ENCODE measurements at regions of chr2 and their contacts with region 1.

Region 1: DNA sequence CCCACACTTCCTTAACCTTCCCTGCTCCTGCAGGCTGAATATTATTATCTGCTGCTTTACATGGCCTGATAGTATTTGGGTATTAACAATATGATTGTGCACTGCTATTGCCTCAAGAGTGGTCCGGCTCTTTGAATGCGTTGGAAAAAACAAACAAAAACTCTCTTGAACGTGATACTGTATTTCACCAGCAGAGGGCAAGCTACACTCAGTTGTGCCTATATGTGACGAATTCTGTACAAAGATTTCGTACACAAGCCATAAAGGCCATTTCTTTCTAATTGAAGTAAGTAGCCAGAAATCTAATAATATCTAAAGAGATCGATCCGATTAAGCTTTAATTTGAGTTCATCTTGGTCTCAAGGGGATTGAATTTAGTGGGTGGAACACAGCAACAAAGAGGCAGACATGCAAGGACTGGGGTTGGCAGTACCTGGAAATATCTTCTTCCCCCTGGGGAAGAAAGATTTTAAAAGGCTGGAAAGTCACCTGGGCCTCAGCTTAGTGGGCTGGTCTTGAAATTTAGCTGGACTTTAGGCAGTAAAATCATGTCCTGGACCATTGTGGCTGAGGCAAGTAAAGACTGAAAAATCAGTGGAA is 49.3 kb upstream of the RAB6D start:
- DNase-seq: no peak
- ATAC-seq: peak in 3 of 8 donors; percentile 53 to 63 (median 56)
- H3K4me3 ChIP-seq: no peak overlapping the region
- H3K27ac ChIP-seq: no peak overlapping the region
- H3K4me1 ChIP-seq: no peaks in the 10 kb centered on the region
- H3K27me3 ChIP-seq: peaks cover 0 to 58% (median 43%) of the 10 kb centered on the region in 7 donors
- CTCF ChIP-seq: peak; percentile 53 to 85 (median 80)

Region 2: GRCh38 chr2:131154071-131154531 is 259.1 kb before region 1 on chr2:
- intact Hi-C with region 1: loop called in 2 of 10 experiments (anchors 10 kb)
- DNase-seq: peak; percentile 23 to 46
- ATAC-seq: peak; percentile 78 to 92 (median 86)
- H3K4me3 ChIP-seq: no peak overlapping the region
- H3K27ac ChIP-seq: no peak overlapping the region
- H3K4me1 ChIP-seq: no peaks in the 10 kb centered on the region
- H3K27me3 ChIP-seq: no peaks in the 10 kb centered on the region
- CTCF ChIP-seq: peak; percentile 48 to 81 (median 77)

Region 3: DNA sequence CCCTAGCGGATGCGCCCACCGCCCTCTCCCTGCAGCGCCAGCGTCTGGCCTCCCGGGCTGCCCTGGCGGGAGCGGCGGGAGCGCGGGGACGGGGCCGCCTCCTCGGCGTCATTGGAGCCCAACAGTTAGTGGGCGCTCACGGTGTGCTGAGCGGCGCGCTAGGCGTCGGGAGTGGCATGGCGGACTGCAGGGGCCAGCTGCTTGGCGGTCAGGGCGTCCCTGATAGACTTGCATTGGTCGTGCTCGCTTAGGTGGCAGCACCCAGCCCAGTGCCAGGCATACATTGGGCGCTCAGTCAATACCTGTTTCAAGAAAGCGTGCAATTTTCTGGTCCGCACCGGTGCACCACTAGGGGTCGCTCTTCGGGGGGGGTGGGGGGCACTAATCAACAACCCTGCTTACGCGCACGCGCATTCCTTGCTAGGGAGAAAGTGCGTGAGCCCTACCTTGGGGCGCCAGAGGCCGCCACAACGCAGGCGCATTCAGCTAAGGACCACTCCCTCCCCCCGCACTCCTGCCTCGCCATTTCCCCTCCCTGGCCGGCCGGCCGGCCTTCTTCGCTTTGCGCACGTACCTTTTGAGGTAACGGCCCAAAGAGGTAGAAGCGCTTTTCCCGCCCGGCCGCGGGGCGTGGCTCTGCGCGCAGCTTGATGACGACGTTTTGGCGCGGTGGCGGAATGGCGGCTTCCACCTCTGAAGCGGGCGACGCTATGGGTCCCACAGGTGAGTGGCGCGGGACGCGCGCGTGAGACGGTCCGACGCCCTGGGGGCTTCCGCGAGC is 79.4 kb after region 1 on chr2:
- intact Hi-C with region 1: loop called in 1 of 10 experiments (anchors 10 kb)
- DNase-seq: peak; percentile 91 to 92
- ATAC-seq: peak; percentile 86 to 96 (median 92)
- H3K4me3 ChIP-seq: peak overlapping the region; percentile 76 to 99 (median 90)
- H3K27ac ChIP-seq: peak overlapping the region; percentile 83 to 94 (median 90)
- H3K4me1 ChIP-seq: peaks cover 3 to 61% (median 40%) of the 10 kb centered on the region in 9 donors
- H3K27me3 ChIP-seq: no peaks in the 10 kb centered on the region
- CTCF ChIP-seq: peak; percentile 39 to 80 (median 74)

Region 4: DNA sequence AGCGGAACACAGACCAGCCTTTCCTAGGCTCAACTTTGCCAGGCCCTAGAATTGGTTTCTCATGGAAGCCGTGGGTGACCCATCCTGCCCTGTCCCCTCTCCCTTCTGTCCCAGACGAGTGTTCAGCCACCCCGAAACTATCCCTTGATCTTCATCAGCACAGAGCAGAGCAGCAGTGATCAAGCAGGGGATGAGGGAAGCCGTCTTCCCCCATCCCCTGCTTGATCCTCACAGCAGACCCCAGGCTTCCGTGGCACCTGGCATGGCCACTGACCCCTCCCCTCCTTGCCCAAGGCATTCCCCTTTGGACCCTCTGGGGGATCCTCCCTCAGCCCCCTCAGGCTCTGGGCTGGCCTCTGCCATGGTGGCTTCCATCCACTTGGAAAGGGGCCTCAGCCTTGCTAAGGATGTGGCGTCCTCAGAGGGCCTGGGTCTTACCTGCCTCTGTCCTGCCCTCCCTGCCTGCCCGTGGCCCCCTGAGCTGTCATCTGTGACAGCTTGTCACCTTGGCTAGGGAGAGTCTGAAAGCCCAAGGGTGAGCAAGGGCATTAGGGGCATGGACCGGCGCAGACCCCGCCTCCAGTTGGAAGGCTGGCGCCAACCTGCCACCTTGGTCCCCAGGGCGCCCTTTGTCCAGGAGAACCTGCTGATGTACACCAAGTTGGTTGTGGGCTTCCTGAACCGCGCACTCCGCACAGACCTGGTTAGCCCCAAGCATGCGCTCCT is 104.0 kb after region 1 on chr2:
- intact Hi-C with region 1: loop called in 6 of 10 experiments (anchors 5 to 10 kb)
- DNase-seq: no peak
- ATAC-seq: peak in 1 of 8 donors; percentile 2
- H3K4me3 ChIP-seq: no peak overlapping the region
- H3K27ac ChIP-seq: no peak overlapping the region
- H3K4me1 ChIP-seq: peaks cover 0 to 5% (median 0%) of the 10 kb centered on the region in 9 donors
- H3K27me3 ChIP-seq: no peaks in the 10 kb centered on the region
- CTCF ChIP-seq: no peak

Region 5: DNA sequence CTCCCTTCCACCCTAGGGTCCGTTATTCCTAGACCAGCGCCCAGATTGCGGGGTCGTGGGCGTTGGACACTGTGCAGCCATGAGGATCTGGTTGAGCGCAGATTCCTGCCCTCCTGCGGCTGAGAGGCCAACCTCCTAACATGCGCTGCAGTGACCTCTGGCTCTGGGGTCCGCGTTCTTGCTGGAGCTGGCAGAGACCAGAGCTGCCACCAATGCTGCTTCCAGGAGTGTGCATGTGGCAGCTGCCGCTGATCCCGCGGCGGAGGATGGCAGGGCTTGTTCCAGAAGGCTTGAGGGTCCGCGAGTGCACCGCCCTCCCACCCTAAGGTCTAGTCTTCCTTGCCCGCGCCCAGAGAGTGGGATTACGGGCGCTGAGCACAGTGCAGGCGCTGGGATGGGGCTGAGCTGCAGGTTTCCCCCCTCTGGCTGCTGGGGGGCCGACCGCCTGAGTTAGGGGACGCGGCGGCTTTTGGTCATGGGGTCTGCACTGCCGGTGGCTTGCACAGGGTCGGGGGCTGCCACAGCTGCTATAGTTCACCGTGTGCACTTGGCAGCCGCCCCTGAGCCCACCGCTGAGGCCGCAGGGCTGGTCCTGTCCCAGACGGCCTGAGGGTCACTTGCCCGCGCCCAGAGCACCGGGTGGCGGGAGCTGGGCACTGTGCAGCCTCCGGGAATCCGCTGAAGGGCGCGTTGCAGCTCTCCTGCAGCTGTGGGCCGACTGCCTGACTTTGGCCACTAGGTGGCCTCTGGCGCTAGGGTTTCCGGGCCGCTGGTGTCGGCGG is 260.3 kb after region 1 on chr2:
- intact Hi-C with region 1: loop called in 7 of 10 experiments (anchors 5 to 10 kb)
- DNase-seq: peak; percentile 73 to 81
- ATAC-seq: peak; percentile 91 to 98 (median 95)
- H3K4me3 ChIP-seq: peak overlapping the region in 9 of 10 donors; percentile 23 to 54 (median 43)
- H3K27ac ChIP-seq: no peak overlapping the region
- H3K4me1 ChIP-seq: peaks cover 0 to 34% (median 20%) of the 10 kb centered on the region in 9 donors
- H3K27me3 ChIP-seq: peaks cover 0 to 46% (median 19%) of the 10 kb centered on the region in 7 donors
- CTCF ChIP-seq: peak; percentile 68 to 94 (median 91)

Region 6: DNA sequence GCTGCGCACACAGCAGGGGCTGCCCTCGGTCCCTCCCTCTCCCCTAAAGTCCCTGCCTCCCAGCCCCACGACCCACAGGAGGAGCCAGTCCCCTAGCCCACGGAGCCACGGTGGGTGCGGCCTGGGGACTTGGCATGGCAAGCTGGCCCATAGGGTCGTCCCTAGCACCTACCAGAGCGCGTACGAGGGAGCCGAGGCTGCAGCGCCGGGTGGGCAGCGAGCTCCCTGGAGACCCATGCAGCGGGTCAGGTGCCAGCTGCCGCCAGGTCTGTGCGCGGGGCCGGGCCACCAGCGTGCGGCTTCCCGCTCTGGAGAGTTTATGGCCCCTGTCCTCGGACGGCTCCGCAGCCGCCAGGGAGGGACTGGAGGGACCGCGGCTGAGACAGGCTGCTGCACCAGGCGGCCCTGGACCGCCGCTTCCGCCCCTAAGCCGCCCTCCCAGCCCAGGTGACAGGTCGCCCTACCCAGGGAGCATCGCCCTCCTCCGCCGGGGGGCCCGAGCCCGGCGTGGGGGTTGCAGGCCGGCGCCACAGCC is 388.0 kb after region 1 on chr2:
- intact Hi-C with region 1: loop called in 3 of 10 experiments (anchors 5 to 10 kb)
- DNase-seq: peak in 1 of 2 donors; percentile 19
- ATAC-seq: no peak
- H3K4me3 ChIP-seq: peak overlapping the region in 6 of 10 donors; percentile 33 to 50 (median 41)
- H3K27ac ChIP-seq: no peak overlapping the region
- H3K4me1 ChIP-seq: peaks cover 0 to 13% (median 4%) of the 10 kb centered on the region in 9 donors
- H3K27me3 ChIP-seq: peaks cover 0 to 18% (median 7%) of the 10 kb centered on the region in 7 donors
- CTCF ChIP-seq: no peak

Measured in heart right ventricle (tissue), 16 donors.